Caco-2 (cell line): ENCODE measurements at regions of chr5 and their contacts with region 1.

Region 1: DNA sequence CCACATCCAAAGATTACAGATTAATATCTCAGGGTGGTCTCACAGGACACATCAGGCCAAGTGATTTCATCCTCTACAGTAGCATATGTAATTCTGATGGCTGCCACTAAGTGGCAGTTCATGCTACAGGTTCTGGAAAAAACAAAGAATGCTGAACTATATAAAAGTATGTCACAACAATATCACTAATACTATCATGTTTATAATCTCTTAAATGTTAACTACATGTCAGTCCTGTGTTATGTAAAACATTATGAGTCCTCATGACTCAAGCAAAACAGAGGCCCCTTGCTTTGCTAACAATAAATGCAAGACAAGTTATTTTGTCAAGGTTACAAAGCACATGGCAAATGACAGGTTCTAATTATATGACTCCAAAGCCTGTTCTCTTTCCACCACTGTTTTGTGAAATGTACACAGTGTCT is 233.2 kb downstream of the FBXL17 start:
- DNase-seq: peak in 1 of 2 experiments; percentile 2
- H3K4me3 ChIP-seq: no peak overlapping the region
- H3K4me3 Mint-ChIP-seq: no peak overlapping the region
- H3K27ac Mint-ChIP-seq: no peak overlapping the region
- H3K4me1 ChIP-seq: no peaks in the 10 kb centered on the region
- H3K4me1 Mint-ChIP-seq: no peaks in the 10 kb centered on the region
- H3K27me3 ChIP-seq: no peaks in the 10 kb centered on the region
- H3K27me3 Mint-ChIP-seq: no peaks in the 10 kb centered on the region
- CTCF ChIP-seq: peak; percentile 59 to 75

Region 2: DNA sequence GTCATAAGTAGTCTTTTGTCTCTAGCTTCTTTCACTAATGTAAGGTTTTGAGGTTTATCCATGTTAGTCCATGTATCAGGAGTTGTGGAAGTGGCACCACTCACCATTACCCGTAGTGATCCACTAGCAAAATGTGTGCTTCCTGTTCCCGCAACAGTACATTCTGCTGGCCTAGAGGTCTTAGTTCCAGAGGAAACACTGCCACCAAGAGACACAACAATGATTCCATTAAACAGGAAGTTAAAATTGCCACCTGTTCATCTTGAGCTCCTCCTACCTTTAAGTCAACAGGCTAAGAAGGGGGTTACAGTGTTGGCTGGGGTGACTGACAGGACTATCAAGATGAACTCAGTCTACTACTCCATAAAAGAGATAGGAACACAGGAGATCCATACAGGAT is 82.7 kb after region 1 on chr5:
- CTCF ChIA-PET with region 1: no interaction called
- POLR2A ChIA-PET with region 1: no interaction called
- intact Hi-C with region 1: loop called (anchors 2 kb)
- DNase-seq: no peak
- H3K4me3 ChIP-seq: no peak overlapping the region
- H3K4me3 Mint-ChIP-seq: no peak overlapping the region
- H3K27ac Mint-ChIP-seq: no peak overlapping the region
- H3K4me1 ChIP-seq: 0 out of 2 replicates have a peak, but pooled peaks cover 3% of the 10 kb centered on the region
- H3K4me1 Mint-ChIP-seq: peaks cover 11% of the 10 kb centered on the region
- H3K27me3 ChIP-seq: no peaks in the 10 kb centered on the region
- H3K27me3 Mint-ChIP-seq: no peaks in the 10 kb centered on the region
- CTCF ChIP-seq: no peak

Region 3: GRCh38 chr5:108260117-108260857 is 111.6 kb after region 1 on chr5:
- CTCF ChIA-PET with region 1: no interaction called
- POLR2A ChIA-PET with region 1: no interaction called
- intact Hi-C with region 1: loop called (anchors 2 kb)
- DNase-seq: peak; percentile 71 to 77
- H3K4me3 ChIP-seq: no peak overlapping the region
- H3K4me3 Mint-ChIP-seq: no peak overlapping the region
- H3K27ac Mint-ChIP-seq: no peak overlapping the region
- H3K4me1 ChIP-seq: 0 out of 2 replicates have a peak, but pooled peaks cover 5% of the 10 kb centered on the region
- H3K4me1 Mint-ChIP-seq: peaks cover 22% of the 10 kb centered on the region
- H3K27me3 ChIP-seq: no peaks in the 10 kb centered on the region
- H3K27me3 Mint-ChIP-seq: no peaks in the 10 kb centered on the region
- CTCF ChIP-seq: peak; percentile 85 to 91

Region 4: GRCh38 chr5:108345541-108346171 is 196.9 kb after region 1 on chr5:
- CTCF ChIA-PET with region 1: interaction called, 3 read pairs
- POLR2A ChIA-PET with region 1: no interaction called
- intact Hi-C with region 1: loop called (anchors 1 kb)
- DNase-seq: peak in 1 of 2 experiments; percentile 30
- H3K4me3 ChIP-seq: no peak overlapping the region
- H3K4me3 Mint-ChIP-seq: no peak overlapping the region
- H3K27ac Mint-ChIP-seq: no peak overlapping the region
- H3K4me1 ChIP-seq: no peaks in the 10 kb centered on the region
- H3K4me1 Mint-ChIP-seq: no peaks in the 10 kb centered on the region
- H3K27me3 ChIP-seq: no peaks in the 10 kb centered on the region
- H3K27me3 Mint-ChIP-seq: no peaks in the 10 kb centered on the region
- CTCF ChIP-seq: peak; percentile 21 to 34